PC-9 (cell line): ENCODE measurements at regions of chr14 and their contacts with region 1.

Region 1: DNA sequence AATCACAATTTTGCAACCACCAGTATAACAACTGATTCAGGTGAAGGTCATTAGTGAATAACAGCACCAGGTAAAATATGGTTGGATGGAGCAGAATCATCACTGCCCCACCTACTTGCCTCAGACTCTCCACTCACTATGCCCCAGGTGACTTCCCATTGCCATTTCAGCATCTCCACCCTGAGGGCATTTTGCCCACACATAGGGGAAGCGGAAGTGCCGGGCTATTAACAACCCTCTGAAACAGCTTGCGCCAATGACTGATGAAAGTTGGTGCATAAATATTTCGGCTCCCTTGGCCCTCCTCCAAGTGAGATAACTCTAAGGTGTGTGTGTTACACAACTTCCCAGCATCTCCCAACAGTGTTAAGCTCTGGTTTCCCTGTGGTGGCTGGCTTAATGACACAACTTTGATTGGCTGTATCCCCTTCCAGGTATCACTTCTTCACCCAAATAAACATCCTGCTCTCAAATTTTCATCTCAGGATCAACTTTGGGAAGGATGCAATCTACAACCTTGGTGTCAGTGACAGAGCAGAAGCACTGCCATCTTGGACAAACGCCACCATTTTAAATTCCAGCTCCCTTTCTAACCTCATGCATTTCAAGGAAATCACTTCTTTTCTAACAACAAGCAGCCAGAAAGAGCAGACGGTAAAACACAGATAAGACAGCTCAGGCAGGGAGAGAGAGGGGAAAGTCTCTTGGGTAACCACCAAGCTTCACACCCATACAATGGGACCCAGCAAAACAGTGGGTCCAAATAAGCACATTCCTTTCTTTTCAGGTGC is 73.6 kb upstream of the PPP2R5C start:
- DNase-seq: peak; percentile 49 to 79
- H3K4me3 ChIP-seq: no peak overlapping the region
- H3K27ac ChIP-seq: no peak overlapping the region
- H3K4me1 ChIP-seq: peaks cover 7% of the 10 kb centered on the region
- H3K27me3 ChIP-seq: no peaks in the 10 kb centered on the region
- CTCF ChIP-seq: no peak

Region 2: DNA sequence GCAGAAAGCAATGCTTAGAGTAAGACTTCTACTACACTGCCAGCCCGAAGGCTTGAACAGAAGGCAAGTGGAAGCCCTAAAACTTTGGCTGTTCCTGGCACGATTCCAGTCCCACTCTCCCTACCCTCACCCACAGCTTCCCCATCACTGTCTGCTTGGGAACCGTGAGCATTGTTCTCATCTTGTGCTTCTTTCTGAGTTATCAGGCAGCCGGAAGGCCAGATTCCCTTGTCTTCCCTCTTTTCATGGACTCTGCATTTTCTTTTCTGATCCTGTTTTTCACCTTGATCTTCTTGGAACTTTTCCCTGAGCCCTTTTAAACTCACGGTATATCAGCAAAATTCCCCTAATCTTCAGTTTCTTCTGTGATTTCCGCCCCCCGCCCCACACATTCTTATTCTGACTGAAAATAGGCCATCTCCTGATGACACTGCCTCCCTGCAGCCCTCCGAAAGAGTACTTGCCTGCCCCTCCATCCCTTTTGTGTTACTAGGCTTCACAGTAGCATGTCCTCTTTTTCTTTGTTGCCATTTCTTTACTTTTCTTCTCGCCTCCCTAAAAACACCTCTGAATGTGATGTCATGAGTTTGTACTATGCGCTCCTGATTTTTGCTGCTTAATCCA is 934.4 kb after region 1 on chr14:
- CTCF ChIA-PET with region 1: no interaction called
- POLR2A ChIA-PET with region 1: interaction called, 15 read pairs
- intact Hi-C with region 1: no loop called
- DNase-seq: no peak
- H3K4me3 ChIP-seq: no peak overlapping the region
- H3K27ac ChIP-seq: no peak overlapping the region
- H3K4me1 ChIP-seq: no peaks in the 10 kb centered on the region
- H3K27me3 ChIP-seq: no peaks in the 10 kb centered on the region
- CTCF ChIP-seq: no peak